Adrenal gland (tissue), 19 donors: ENCODE measurements at regions of chr5 and their contacts with region 1.

Region 1: GRCh38 chr5:149367249-149367971 is 9.6 kb downstream of the PCYOX1L start:
- DNase-seq: peak in 6 of 7 donors; percentile 43 to 85 (median 68)
- H3K4me3 ChIP-seq: no peak overlapping the region
- H3K27ac ChIP-seq: no peak overlapping the region
- H3K4me1 ChIP-seq: peaks cover 0 to 7% of the 10 kb centered on the region in 2 donors
- H3K27me3 ChIP-seq: no peaks in the 10 kb centered on the region
- CTCF ChIP-seq: peak; percentile 64 to 79 (median 72)
- POLR2A ChIP-seq: no peak

Region 2: GRCh38 chr5:149317281-149318048 is 49.9 kb before region 1 on chr5:
- intact Hi-C with region 1: loop called (anchors 5 kb)
- DNase-seq: peak in 5 of 7 donors; percentile 20 to 66 (median 40)
- H3K4me3 ChIP-seq: no peak overlapping the region
- H3K27ac ChIP-seq: no peak overlapping the region
- H3K4me1 ChIP-seq: peaks cover 3 to 15% of the 10 kb centered on the region in 2 donors
- H3K27me3 ChIP-seq: no peaks in the 10 kb centered on the region
- CTCF ChIP-seq: peak; percentile 53 to 79 (median 73)
- POLR2A ChIP-seq: no peak

Region 3: DNA sequence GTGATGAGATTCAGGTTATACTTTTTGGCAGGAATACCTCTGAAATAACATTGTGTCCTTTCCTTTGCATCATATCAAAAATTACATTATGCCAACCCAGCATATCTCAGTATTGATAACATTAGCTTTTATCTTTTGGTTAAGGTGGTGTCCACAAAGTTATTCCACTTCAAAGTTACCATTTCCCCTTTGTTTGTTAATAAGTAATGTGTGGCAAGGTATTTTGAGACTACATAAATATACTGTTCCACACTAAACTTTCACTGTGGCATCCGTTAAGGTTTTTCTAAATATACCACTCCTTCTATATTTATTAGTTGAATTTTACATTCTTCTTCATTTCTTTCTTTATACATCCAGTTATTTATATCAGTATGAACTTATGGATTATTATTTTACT is 199.8 kb after region 1 on chr5:
- intact Hi-C with region 1: loop called in 1 of 2 experiments (anchors 5 kb)
- DNase-seq: no peak
- H3K4me3 ChIP-seq: no peak overlapping the region
- H3K27ac ChIP-seq: no peak overlapping the region
- H3K4me1 ChIP-seq: peaks cover 6 to 19% of the 10 kb centered on the region in 2 donors
- H3K27me3 ChIP-seq: no peaks in the 10 kb centered on the region
- CTCF ChIP-seq: no peak
- POLR2A ChIP-seq: no peak

Region 4: GRCh38 chr5:149618581-149619251 is 251.3 kb after region 1 on chr5:
- intact Hi-C with region 1: loop called in 1 of 2 experiments (anchors 10 kb)
- DNase-seq: peak; percentile 32 to 73 (median 50)
- H3K4me3 ChIP-seq: no peak overlapping the region
- H3K27ac ChIP-seq: no peak overlapping the region
- H3K4me1 ChIP-seq: no peaks in the 10 kb centered on the region
- H3K27me3 ChIP-seq: no peaks in the 10 kb centered on the region
- CTCF ChIP-seq: peak; percentile 51 to 68 (median 62)
- POLR2A ChIP-seq: no peak